Activated naive CD4-positive, alpha-beta T cell treated with anti-CD3 and anti-CD28 coated beads, Interleukin-2, amount 10 ng/mL, durations not matched to agents 7 days and 5 days (primary cell): ENCODE measurements at regions of chr12 and their contacts with region 1.

Region 1: GRCh38 chr12:44947163-44947562 is 71.0 kb upstream of the NELL2 start:
- DNase-seq: no peak
- H3K4me3 Mint-ChIP-seq: no peak overlapping the region
- H3K27ac Mint-ChIP-seq: no peak overlapping the region
- H3K4me1 Mint-ChIP-seq: peaks cover 3% of the 10 kb centered on the region
- H3K27me3 Mint-ChIP-seq: peaks cover 9% of the 10 kb centered on the region

Region 2: GRCh38 chr12:44960856-44961255 is 13.7 kb after region 1 on chr12:
- CTCF ChIA-PET with region 1: interaction called, 14 read pairs
- DNase-seq: no peak
- H3K4me3 Mint-ChIP-seq: no peak overlapping the region
- H3K27ac Mint-ChIP-seq: no peak overlapping the region
- H3K4me1 Mint-ChIP-seq: no peaks in the 10 kb centered on the region
- H3K27me3 Mint-ChIP-seq: peaks cover 7% of the 10 kb centered on the region

Region 3: GRCh38 chr12:44972746-44973421 is 25.7 kb after region 1 on chr12:
- CTCF ChIA-PET with region 1: interaction called, 14 read pairs
- DNase-seq: peak; percentile 21
- H3K4me3 Mint-ChIP-seq: no peak overlapping the region
- H3K27ac Mint-ChIP-seq: no peak overlapping the region
- H3K4me1 Mint-ChIP-seq: peaks cover 12% of the 10 kb centered on the region
- H3K27me3 Mint-ChIP-seq: peaks cover 9% of the 10 kb centered on the region

Region 4: DNA sequence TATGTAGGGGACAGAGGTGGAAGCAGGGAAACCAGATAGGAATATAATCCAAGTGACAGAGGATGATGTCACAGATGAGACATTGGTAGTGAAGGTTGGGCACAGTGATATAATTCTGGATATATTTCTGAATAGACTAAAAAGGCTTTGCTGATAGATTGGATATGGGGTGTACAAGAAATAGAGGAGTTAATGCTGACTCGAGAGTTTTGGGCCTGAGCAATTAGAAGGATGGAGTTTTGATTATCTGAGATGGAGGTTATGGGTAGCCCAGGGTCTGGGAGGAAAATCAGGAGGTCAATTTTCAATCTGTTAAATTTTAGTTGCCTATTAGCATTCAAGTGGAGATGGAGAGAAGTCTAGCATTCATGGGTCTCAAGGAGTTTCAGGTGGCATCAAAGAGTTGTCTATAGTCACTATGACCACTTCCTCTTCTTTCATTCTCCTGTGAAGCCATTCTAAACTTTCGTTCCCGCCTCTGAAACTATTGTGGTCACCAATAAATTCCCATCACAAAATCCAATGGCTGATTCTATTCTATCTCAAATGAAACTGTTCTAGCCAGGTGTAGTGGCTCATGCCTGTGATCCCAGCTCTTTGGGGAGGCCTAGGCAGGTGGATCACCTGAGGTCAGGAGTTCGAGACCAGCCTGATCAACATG is 258.1 kb after region 1 on chr12:
- CTCF ChIA-PET with region 1: no interaction called
- DNase-seq: no peak
- H3K4me3 Mint-ChIP-seq: no peak overlapping the region
- H3K27ac Mint-ChIP-seq: no peak overlapping the region
- H3K4me1 Mint-ChIP-seq: peaks cover 15% of the 10 kb centered on the region
- H3K27me3 Mint-ChIP-seq: no peaks in the 10 kb centered on the region